Posterior vena cava (tissue), 2 donors: ENCODE measurements at regions of chr6 and their contacts with region 1.

Region 1: GRCh38 chr6:126661646-126662045 is 321.7 kb downstream of the CENPW start:
- DNase-seq: no peak

Region 2: DNA sequence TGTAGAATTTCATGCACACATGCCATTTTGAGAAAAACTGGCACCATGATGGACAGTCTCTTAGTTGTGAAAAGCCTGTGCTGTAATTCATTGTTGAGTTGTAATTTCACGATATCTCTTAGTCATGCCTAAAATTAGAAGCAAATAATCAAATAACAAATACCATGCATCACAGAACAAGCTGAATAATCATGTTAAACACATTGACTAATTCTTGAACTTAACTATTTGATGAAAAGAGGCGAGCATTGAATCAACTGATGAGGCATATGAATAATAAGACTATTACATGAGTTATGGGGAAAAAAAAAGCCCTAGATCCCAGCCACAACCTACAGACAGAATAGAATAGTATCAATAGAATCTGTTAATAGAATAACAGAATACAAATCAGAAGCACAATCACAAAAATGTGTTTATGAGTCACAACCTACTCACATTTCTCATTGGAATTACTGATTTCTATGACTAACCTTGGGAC is 1713.6 kb before region 1 on chr6:
- intact Hi-C with region 1: loop called in 1 of 2 experiments (anchors 10 kb)
- DNase-seq: no peak

Region 3: GRCh38 chr6:126738146-126738545 is 76.5 kb after region 1 on chr6:
- intact Hi-C with region 1: no loop called
- DNase-seq: no peak